Activated T-helper 2 cell treated with anti-CD3 and anti-CD28 coated beads, Interferon-gamma antibody, Interleukin-2, Interleukin-4, amounts not matched to agents 10 μg/mL and 5 μg/mL and 100 μg/mL, durations not matched to agents 14 hours and 24 hours and 36 hours (primary cell): ENCODE measurements at regions of chr18 and their contacts with region 1.

Region 1: DNA sequence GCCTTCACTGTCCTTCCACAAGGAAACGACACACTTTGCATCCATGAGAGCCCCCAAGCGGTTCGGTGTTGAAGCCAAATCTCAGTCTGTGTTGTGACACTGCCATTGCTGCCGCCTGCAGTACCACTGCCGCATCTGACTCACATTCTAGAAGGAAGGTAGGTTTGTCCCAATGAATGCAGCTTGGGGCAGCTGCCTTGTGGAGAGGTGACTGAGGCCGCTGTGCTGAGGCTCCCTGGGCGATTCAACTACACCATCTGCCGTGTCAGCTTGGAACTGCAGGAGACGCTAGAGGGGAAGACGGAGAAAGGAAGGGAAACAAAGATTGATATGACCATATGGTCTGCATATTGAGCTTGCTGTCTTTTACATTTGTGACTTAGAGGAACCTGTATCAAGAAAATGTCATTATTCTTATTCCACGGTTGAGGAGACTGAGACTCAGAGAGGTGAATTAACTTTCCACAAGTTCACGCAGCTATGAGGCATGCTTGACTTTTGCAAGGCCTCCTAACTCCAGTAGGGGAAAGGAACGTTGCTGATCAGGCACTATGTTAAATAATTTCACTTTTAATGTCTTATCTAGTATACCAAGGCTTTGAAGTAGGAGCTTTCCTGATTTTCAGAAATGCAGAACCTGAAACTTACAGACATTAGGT is 43.5 kb upstream of the LMAN1 start:
- DNase-seq: peak; percentile 55
- H3K4me3 Mint-ChIP-seq: no peak overlapping the region
- H3K27ac Mint-ChIP-seq: no peak overlapping the region
- H3K4me1 Mint-ChIP-seq: peaks cover 3% of the 10 kb centered on the region
- H3K27me3 Mint-ChIP-seq: peaks cover 10% of the 10 kb centered on the region

Region 2: GRCh38 chr18:59085797-59086196 is 316.8 kb before region 1 on chr18:
- intact Hi-C with region 1: loop called (anchors 2 kb)
- DNase-seq: no peak
- H3K4me3 Mint-ChIP-seq: no peak overlapping the region
- H3K27ac Mint-ChIP-seq: no peak overlapping the region
- H3K4me1 Mint-ChIP-seq: peaks cover 6% of the 10 kb centered on the region
- H3K27me3 Mint-ChIP-seq: peaks cover 16% of the 10 kb centered on the region

Region 3: GRCh38 chr18:59249205-59249774 is 153.3 kb before region 1 on chr18:
- intact Hi-C with region 1: loop called (anchors 2 kb)
- DNase-seq: no peak
- H3K4me3 Mint-ChIP-seq: no peak overlapping the region
- H3K27ac Mint-ChIP-seq: no peak overlapping the region
- H3K4me1 Mint-ChIP-seq: no peaks in the 10 kb centered on the region
- H3K27me3 Mint-ChIP-seq: peaks cover 37% of the 10 kb centered on the region

Region 4: DNA sequence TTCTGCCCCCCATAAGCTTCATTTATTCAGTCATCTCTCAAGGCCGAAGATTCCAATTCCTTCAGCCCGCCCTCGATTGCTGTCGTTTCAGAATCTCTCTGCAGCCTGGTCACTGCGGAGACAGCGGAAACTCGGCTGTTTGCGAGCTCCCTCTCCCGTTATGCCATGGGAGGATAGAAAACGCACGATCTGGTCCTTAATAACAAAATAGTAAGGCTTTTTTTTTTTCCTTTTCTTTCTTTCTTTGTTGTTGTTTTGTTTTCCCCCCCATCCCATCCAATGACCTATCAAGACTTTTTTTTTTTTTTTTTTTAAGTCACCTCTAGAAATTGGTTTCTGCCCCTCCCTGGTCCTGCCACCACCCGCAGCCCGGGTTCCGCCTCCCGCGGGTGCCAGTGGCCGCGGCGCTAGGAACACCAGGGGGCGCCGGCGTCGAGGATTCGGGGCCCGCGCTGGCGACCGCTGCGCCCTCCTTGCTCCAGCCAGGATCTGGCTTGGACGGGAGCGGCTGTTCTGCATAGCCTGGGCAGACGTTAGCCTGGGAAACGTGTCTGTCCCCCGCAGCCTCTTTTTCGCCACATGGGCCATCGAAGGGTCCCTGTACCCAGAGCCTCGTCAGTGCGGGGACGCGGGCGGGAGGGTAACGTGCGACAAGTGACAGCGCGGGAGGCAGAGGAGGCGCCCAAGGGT is 94.2 kb before region 1 on chr18:
- intact Hi-C with region 1: loop called (anchors 2 kb)
- DNase-seq: peak; percentile 54
- H3K4me3 Mint-ChIP-seq: peak overlapping the region; percentile 50
- H3K27ac Mint-ChIP-seq: no peak overlapping the region
- H3K4me1 Mint-ChIP-seq: peaks cover 3% of the 10 kb centered on the region
- H3K27me3 Mint-ChIP-seq: peaks cover 45% of the 10 kb centered on the region

Region 5: GRCh38 chr18:59358712-59359575 is 43.6 kb before region 1 on chr18 and contains the start of gene LMAN1:
- intact Hi-C with region 1: loop called (anchors 5 kb)
- DNase-seq: peak; percentile 89
- H3K4me3 Mint-ChIP-seq: peak within 1 kb of the TSS; percentile 100
- H3K27ac Mint-ChIP-seq: peak within 1 kb of the TSS; percentile 100
- H3K4me1 Mint-ChIP-seq: peaks cover 29% of the 10 kb centered on the region
- H3K27me3 Mint-ChIP-seq: peaks cover 9% of the 10 kb centered on the region
- total RNA-seq, gene LMAN1: 141 and 146 TPM in 2 replicates

Region 6: GRCh38 chr18:59376351-59376935 is 26.1 kb before region 1 on chr18:
- intact Hi-C with region 1: no loop called
- DNase-seq: no peak
- H3K4me3 Mint-ChIP-seq: no peak overlapping the region
- H3K27ac Mint-ChIP-seq: no peak overlapping the region
- H3K4me1 Mint-ChIP-seq: peaks cover 15% of the 10 kb centered on the region
- H3K27me3 Mint-ChIP-seq: peaks cover 13% of the 10 kb centered on the region